Activated B cell treated with CpG ODN at 0.5 μM for 24 hours (primary cell): ENCODE measurements at regions of chr19 and their contacts with region 1.

Region 1: GRCh38 chr19:45164577-45165335 is 4.0 kb upstream of the NKPD1 start:
- DNase-seq: peak; percentile 49
- ATAC-seq: peak; percentile 85
- H3K4me3 Mint-ChIP-seq: peak overlapping the region; percentile 24
- H3K27ac Mint-ChIP-seq: no peak overlapping the region
- H3K4me1 Mint-ChIP-seq: peaks cover 17% of the 10 kb centered on the region
- H3K27me3 Mint-ChIP-seq: peaks cover 8% of the 10 kb centered on the region
- CTCF ChIP-seq: no peak

Region 2: DNA sequence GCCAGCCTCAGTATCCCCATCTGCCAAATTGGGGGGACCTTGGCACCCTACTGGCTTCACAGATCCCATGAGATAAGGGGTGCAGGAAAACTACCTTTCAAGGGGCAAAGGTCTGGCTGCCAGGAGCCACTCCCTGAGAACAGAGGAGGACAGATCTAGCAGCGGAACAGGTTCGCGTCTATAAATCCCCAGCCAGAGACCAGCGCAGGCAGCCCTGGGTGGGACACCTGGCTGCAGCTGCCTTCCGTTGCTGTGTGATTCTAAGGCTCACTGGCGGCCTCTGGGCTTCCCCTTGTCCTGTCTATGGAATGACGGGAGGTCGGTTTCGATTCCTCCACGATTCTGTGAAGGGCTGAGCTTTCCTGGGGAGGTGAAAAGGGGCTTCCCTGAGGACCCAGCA is 156.2 kb before region 1 on chr19:
- CTCF ChIA-PET with region 1: no interaction called
- POLR2A ChIA-PET with region 1: interaction called, 20 read pairs
- intact Hi-C with region 1: no loop called
- DNase-seq: no peak
- ATAC-seq: no peak
- H3K4me3 Mint-ChIP-seq: no peak overlapping the region
- H3K27ac Mint-ChIP-seq: no peak overlapping the region
- H3K4me1 Mint-ChIP-seq: peaks cover 26% of the 10 kb centered on the region
- H3K27me3 Mint-ChIP-seq: no peaks in the 10 kb centered on the region
- CTCF ChIP-seq: no peak

Region 3: GRCh38 chr19:45022010-45022409 is 142.7 kb before region 1 on chr19:
- CTCF ChIA-PET with region 1: no interaction called
- POLR2A ChIA-PET with region 1: no interaction called
- intact Hi-C with region 1: no loop called
- DNase-seq: no peak
- ATAC-seq: no peak
- H3K4me3 Mint-ChIP-seq: no peak overlapping the region
- H3K27ac Mint-ChIP-seq: no peak overlapping the region
- H3K4me1 Mint-ChIP-seq: peaks cover 7% of the 10 kb centered on the region
- H3K27me3 Mint-ChIP-seq: no peaks in the 10 kb centered on the region
- CTCF ChIP-seq: no peak